Cardiac septum (tissue), 1 donor: ENCODE measurements at regions of chr22 and their contacts with region 1.

Region 1: DNA sequence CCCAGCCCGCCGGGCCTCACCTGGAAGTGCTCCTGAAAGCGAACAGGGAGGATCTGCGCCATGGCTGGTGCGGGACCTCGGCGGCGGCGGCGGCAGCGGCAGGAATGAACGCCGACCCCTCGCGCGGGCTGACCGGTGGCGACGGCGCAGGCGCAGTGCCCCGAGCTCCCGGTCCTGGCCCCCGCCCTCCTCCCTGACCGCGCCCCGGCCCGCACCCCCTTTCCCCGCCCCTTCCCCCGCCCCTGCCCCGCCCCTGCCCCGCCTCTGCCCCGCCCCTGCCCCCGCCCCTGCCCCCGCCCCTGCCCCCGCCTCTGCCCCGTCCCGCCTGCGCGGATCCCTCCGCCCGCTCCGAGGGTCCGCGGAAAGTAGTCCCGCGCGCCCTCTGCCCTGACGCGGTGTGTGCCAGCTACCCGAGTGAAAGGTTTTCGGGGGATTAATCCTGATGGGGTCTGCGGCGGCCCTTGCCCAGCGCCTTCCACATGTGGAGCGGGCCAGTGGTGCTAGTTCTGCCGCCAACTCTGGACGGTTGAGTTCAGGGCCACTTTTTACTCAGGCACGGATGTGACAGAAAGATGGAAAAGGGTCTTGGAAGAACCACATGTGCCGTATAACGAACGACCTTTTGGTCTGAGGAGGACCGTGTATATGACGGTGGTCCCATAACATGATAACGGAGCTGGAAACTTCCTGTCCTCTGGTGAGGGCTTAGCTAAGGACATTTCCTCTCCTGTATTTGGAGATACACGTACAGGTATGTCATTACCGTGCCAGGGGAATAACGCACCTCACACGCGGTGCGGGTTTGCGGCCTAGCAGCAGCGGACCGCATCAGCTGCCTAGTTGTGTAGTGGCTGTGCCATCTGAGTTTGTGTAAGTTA is at the start of gene CLTCL1:
- DNase-seq: peak; percentile 94
- total RNA-seq, gene CLTCL1: 18.0 TPM

Region 2: DNA sequence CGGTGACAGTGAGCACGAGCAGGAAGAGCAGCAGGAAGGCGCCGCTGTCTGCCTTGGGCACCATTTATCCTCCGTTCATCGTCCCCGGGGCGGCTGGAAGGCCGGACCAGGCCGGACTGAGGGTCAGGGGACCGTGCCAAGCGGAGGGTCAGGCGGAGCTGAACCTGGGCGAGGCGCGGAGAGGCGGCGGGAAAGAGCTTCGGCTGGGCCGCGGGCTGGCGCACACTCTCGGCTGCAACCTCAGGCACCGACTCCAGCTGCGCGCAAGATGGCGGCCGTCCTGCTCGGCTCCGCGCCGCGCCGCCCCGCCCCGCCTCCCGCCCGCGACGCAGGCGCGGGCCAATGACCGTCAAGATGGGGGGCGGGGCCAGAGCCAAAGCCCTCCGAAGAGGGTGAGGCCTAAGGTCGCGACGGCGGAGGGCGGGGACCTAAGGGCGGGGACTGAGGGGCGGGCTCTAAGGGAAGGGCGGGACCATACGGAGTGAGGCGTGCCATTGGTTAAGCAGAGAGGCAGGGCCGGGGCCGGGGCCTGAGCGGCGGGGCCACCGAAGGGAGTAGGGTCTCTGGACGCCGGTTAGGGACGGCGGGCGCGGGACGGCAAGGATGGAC is 169.6 kb before region 1 on chr22 and contains the start of gene DGCR2:
- intact Hi-C with region 1: loop called (anchors 10 kb)
- DNase-seq: peak; percentile 99
- total RNA-seq, gene DGCR2: 35.2 TPM

Region 3: GRCh38 chr22:19178656-19179496 is 112.9 kb before region 1 on chr22 and contains the start of gene SLC25A1:
- intact Hi-C with region 1: loop called (anchors 5 kb)
- DNase-seq: peak; percentile 95
- total RNA-seq, gene SLC25A1: 22.2 TPM

Region 4: GRCh38 chr22:19357270-19358105 is 65.7 kb after region 1 on chr22:
- intact Hi-C with region 1: no loop called
- DNase-seq: no peak

Region 5: GRCh38 chr22:19432133-19432851 is 140.5 kb after region 1 on chr22 and contains the start of gene MRPL40:
- intact Hi-C with region 1: loop called (anchors 5 kb)
- DNase-seq: peak; percentile 97
- total RNA-seq, gene MRPL40: 44.1 TPM

Region 6: DNA sequence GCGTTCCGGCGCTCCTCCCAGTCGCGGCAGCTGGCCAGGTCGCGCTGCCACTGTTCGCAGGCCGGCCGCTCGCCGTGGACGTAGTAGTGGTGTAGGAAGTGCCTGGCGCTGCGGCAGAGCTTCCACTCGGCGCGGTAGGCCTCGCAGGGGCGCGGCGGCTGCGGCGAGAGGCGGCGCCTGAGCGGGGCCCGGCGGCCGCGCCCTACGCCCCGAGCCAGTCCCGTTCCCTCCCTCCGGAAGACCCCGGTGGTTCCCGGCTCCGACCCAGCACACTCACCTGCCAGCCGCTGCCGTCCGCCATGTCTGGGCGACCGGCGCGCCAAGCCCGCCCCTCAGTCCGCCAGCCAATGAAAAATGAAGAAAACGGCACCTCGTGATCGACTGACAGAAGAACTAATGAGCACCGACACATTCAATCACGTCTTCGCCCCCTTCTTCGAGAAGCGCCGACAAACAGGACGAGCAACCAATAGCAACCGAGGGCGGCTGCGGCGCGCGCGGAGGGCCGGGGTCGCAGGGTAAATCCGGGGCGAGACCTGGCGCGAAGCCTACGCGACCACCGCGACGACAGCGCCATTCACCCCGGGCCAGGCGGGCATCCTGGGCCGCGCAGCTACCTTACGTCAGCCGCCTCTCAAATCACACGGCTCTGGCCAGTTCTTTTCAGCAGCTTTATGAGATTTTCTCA is 155.7 kb after region 1 on chr22 and contains the start of gene C22orf39:
- intact Hi-C with region 1: loop called (anchors 5 kb)
- DNase-seq: peak; percentile 95
- total RNA-seq, gene C22orf39: 48.7 TPM

Region 7: GRCh38 chr22:19717691-19718455 is 426.1 kb after region 1 on chr22:
- intact Hi-C with region 1: loop called (anchors 10 kb)
- DNase-seq: peak; percentile 92